ENCODE measurements at regions of chr17 and their contacts with region 1.

Region 1: GRCh38 chr17:69690531-69690930 is 276.0 kb downstream of the MAP2K6 start:
- DNase-seq: no peak
- H3K4me3 ChIP-seq: no peak overlapping the region
- H3K27ac ChIP-seq: no peak overlapping the region
- H3K4me1 ChIP-seq: no peaks in the 10 kb centered on the region
- H3K27me3 ChIP-seq: peaks cover 3% of the 10 kb centered on the region
- CTCF ChIP-seq: no peak

Region 2: DNA sequence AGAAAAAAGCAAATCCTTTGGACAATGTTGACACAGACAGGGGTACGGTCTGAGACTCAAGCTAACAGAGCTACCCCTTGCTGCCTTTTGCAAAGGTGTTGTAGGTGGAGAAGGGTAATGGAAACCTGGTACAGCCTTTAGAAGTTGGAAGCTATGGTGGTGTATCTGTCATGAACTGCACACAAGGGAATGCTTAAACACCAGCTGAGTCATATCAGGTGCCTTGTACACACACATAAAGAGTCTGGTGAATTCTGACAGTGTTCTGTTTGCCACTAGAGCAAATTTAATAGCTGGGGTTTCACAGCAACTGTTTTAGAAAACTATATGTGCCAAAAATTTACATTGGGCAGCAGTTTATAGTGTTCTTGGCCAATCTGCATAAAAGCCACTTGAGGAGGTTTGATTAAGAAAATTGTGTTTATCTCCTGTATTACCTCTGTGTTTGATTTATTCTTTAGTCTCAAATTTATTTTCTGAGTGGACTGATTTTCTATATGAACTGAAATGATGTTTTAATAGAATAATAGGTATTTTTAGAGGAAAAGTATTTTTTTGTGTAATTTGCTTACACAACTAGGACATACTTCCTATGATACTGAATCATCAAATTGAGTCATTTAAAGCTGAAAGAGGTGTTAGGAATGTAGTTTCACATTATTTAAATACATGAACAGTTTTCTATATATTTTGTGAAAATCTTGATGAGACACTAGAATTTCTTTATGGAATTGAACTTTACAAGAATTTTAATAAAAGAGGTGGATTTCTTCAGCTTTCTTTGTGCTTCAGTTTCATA is 139.1 kb before region 1 on chr17:
- CTCF ChIA-PET with region 1: no interaction called
- POLR2A ChIA-PET with region 1: no interaction called
- intact Hi-C with region 1: no loop called
- DNase-seq: no peak
- H3K4me3 ChIP-seq: no peak overlapping the region
- H3K27ac ChIP-seq: no peak overlapping the region
- H3K4me1 ChIP-seq: no peaks in the 10 kb centered on the region
- H3K27me3 ChIP-seq: no peaks in the 10 kb centered on the region
- CTCF ChIP-seq: no peak

Region 3: DNA sequence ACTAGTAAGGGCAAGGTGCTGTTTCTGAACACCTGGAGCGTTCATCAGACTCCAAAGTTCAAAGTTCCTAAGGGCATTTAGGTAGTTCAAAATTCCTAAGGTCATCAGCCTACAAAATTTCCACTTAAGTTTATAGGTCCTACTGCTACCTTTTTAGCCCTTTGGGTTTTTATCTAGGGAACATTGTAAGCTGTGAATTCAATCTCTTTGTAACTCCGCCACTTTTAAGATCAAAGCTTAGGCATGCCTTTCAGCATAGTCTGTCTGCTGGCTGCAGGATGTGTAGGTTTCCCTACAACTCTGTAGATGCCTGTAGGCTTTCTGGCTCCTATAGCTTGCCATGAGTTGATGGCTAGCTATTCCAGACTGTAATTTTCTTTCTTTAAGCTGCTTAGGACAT is 15.6 kb after region 1 on chr17:
- CTCF ChIA-PET with region 1: no interaction called
- POLR2A ChIA-PET with region 1: no interaction called
- intact Hi-C with region 1: loop called (anchors 2 kb)
- DNase-seq: no peak
- H3K4me3 ChIP-seq: no peak overlapping the region
- H3K27ac ChIP-seq: no peak overlapping the region
- H3K4me1 ChIP-seq: no peaks in the 10 kb centered on the region
- H3K27me3 ChIP-seq: peaks cover 5% of the 10 kb centered on the region
- CTCF ChIP-seq: no peak

Region 4: DNA sequence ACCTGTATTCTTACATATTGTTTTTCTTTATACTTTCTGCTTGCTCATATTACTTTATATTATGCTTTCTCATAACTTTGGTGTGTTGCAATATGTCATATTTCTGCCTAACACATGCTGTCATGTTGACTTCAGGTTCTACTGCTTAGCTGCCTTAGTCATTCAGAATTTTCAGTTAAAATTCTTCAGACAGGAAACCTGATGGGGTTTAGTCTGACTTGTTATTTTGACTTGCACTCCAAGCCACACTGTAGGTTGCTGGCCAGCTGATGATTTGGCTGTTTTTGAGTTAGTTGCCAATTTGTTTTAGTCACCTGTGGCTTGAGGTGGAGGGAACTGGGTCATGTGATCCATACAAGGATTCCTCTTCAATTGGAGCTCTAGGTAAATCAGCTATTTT is 39.4 kb after region 1 on chr17:
- CTCF ChIA-PET with region 1: no interaction called
- POLR2A ChIA-PET with region 1: no interaction called
- intact Hi-C with region 1: loop called (anchors 5 kb)
- DNase-seq: no peak
- H3K4me3 ChIP-seq: no peak overlapping the region
- H3K27ac ChIP-seq: no peak overlapping the region
- H3K4me1 ChIP-seq: no peaks in the 10 kb centered on the region
- H3K27me3 ChIP-seq: no peaks in the 10 kb centered on the region
- CTCF ChIP-seq: no peak

Region 5: DNA sequence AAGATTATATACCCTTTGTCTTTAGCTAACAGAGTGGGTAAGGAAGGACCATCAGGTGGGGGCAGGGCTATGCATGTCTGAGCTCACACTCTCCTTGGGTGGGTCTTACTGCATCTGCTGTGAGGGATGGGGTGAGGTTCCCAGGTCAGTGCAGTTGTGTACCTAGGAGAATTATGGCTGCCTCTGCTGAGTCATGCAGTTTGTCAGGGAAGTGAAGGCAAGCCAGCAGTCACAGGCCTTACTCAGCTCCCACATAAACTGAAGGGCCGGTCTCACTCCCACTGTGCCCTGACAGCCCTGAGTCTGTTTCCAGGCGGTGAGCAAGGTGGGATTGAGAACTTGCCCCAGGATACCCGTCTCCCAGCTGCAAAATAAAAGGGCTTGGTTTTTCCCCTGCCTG is 52.6 kb after region 1 on chr17:
- CTCF ChIA-PET with region 1: no interaction called
- POLR2A ChIA-PET with region 1: no interaction called
- intact Hi-C with region 1: no loop called
- DNase-seq: no peak
- H3K4me3 ChIP-seq: no peak overlapping the region
- H3K27ac ChIP-seq: no peak overlapping the region
- H3K4me1 ChIP-seq: no peaks in the 10 kb centered on the region
- H3K27me3 ChIP-seq: no peaks in the 10 kb centered on the region
- CTCF ChIP-seq: no peak

Region 6: GRCh38 chr17:70080541-70081347 is 390.2 kb after region 1 on chr17:
- CTCF ChIA-PET with region 1: no interaction called
- POLR2A ChIA-PET with region 1: no interaction called
- intact Hi-C with region 1: no loop called
- DNase-seq: no peak
- H3K4me3 ChIP-seq: no peak overlapping the region
- H3K27ac ChIP-seq: no peak overlapping the region
- H3K4me1 ChIP-seq: no peaks in the 10 kb centered on the region
- H3K27me3 ChIP-seq: no peaks in the 10 kb centered on the region
- CTCF ChIP-seq: no peak